Dorsolateral prefrontal cortex (tissue), 120 donors: ENCODE measurements at regions of chr2 and their contacts with region 1.

Region 1: GRCh38 chr2:237966565-237967462 is at the start of gene UBE2F:
- DNase-seq: peak; percentile 93 to 99 (median 96)
- H3K4me3 ChIP-seq: peak within 1 kb of the TSS; percentile 53 to 100 (median 84)
- H3K27ac ChIP-seq: peak within 1 kb of the TSS in 51 of 59 donors; percentile 6 to 88 (median 66)
- H3K27me3 ChIP-seq: no peaks in the 10 kb centered on the region
- CTCF ChIP-seq: peak in 46 of 56 donors; percentile 6 to 67 (median 38)
- total RNA-seq, gene UBE2F: 30.6 to 63.0 (median 47.0) TPM

Region 2: DNA sequence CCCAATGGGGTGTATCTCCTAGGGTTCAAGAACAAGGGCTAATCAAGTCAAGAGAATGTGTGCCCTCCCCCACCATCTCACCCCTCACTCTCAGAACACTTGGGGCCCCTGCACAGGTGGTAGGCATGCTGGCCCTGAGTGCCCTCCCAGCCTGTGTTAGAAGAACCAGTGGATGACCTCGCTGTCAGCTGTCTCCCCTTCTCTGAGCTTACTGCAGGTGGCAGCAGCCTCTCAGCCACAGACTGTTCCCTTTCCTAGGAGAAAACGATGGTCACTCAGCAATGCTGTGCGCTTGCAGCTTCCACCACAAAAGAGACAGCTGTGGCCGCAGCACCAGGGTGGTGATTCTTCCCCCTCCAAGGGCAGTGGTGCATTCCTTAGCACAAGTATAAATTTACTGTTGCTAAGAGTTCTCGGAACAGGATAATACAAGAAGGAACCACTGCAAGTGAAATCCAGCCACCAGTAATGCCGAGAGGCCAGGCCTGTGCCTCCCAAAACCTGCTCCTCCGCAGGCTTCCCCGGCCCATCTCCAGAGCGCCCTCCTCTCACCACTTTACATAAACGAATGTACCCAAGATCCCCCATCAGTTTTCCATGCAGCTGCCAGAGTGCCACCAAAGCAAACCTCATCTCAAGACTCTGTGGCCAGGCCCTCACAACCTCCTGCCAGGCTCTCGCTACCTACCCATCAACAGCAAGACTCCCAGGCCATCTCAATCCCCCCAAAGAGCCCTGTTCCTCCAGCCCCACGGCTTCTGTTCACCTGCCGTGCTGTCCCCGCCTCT is 108.3 kb before region 1 on chr2:
- intact Hi-C with region 1: loop called (anchors 1 to 2 kb)
- DNase-seq: peak; percentile 63 to 88 (median 84)
- H3K4me3 ChIP-seq: peak overlapping the region in 57 of 59 donors; percentile 7 to 83 (median 70)
- H3K27ac ChIP-seq: peak overlapping the region in 57 of 59 donors; percentile 6 to 93 (median 74)
- H3K27me3 ChIP-seq: peaks cover 0 to 2% (median 0%) of the 10 kb centered on the region in 45 donors
- CTCF ChIP-seq: peak; percentile 40 to 95 (median 84)

Region 3: DNA sequence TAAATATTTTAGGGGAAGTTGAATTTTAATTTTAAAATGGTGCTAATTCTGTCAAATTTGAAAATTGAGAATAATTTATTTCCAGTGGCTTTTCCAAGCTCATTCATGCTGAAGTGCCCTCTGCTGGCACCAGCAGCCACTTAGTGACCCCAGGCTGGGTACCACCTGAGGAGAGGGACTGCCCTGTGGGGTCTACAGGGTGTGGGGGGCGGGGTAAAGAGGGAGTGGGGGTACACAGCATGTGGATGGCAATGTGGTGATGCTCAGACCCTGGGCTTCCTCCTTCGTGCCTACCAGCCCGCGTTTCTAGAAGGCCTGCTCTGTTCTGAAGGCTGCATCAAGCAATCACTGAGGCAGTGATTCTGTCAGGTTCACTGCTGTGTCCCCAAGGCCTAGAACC is 48.9 kb after region 1 on chr2:
- intact Hi-C with region 1: loop called (anchors 1 to 5 kb)
- DNase-seq: no peak
- H3K4me3 ChIP-seq: no peak overlapping the region
- H3K27ac ChIP-seq: no peak overlapping the region
- H3K27me3 ChIP-seq: no peaks in the 10 kb centered on the region
- CTCF ChIP-seq: peak in 45 of 56 donors; percentile 12 to 64 (median 34)

Region 4: DNA sequence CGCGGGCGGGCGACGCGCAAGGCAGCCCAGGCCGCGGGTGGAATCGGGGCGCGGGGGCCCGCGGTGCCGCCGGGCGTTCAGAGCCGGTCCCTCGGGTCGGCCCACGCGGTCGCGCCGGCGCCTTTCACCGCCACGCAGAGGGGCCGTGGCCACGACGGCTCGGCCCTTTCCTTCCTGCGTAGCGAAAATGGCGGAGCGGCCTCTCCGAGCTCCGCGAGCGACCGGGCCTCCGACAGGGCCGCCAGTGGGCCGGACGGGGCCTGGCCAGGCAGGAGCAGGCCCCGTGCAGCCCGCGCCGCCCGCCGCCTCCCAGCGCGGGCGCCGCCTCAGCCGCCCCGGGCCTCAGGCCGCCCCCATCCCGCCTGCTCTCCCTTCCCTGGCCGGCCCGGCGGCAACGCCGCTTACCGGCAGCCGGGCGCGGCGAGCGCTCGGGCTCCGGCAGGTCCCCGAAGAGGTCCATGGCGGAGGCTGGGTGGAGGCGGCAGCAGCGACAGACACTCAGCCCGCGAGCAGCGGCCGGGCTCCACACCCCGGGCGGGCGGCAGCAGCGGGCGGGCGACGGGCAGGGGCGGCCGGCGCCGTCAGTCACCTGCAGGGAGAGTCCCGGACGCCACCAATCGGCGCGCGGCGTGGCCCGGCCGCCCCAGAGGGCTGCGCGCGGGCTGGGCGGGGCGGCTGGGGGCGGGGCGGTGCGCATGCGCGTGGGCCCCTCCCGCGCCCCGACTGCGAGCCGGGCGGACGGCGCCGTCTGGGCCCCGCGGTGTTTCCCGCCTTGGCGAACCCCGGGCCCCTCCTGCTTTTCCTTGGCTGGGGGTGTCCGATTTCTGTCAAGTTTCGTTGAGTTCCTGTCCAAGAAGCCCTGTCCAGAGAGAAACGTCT is 236.5 kb after region 1 on chr2 and contains the start of gene ILKAP:
- intact Hi-C with region 1: loop called in 1 of 2 experiments (anchors 5 kb)
- DNase-seq: peak; percentile 70 to 94 (median 85)
- H3K4me3 ChIP-seq: peak within 1 kb of the TSS; percentile 54 to 96 (median 79)
- H3K27ac ChIP-seq: peak within 1 kb of the TSS; percentile 73 to 98 (median 93)
- H3K27me3 ChIP-seq: no peaks in the 10 kb centered on the region
- CTCF ChIP-seq: peak in 9 of 56 donors; percentile 7 to 33 (median 23)
- total RNA-seq, gene ILKAP: 44.0 to 90.8 (median 62.7) TPM

Region 5: DNA sequence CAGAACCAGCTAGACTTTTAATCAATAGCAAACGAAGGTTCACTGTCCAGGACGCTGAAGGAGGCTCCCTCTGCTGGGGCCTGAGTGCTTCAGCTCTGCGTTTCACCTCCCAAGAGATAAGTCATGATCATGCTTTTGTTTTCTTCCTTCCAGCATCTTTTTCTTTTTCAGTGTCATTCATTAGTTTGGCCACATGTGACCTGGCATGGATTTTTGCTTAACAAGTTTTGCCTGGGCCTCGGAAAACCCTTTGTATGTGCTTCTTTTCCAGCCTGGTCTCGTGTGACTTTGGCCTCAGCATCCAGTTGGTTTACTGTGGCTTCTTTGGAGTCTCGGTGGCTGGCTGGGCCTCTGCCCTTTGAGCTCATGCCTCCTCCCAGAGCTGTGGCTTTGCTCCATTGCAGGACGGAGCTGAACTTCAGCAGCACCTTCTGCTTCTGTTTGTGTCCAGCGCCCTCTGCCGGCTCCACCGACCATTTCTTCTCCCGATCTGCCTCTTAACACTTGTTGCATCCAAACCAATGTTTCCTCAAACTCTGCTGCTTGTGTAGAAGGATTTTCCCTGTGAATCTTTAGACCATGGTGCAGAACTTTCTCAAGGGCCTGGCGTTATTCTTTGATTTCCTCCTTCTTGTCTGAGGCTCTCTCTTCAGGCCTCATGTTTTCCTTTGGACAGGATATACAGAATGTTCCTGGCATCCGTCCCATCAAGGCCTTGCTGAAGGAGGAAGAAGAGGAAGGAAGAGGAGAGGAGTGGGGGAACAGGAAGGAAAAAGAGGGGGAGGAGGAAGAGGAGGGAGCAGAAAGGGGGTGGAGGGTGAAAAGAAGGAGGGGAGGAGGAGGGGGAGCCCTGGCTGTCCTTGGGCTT is 296.6 kb after region 1 on chr2:
- intact Hi-C with region 1: loop called (anchors 5 to 10 kb)
- DNase-seq: peak; percentile 85 to 98 (median 94)
- H3K4me3 ChIP-seq: peak overlapping the region in 1 of 59 donors; percentile 7
- H3K27ac ChIP-seq: peak overlapping the region in 42 of 59 donors; percentile 1 to 78 (median 56)
- H3K27me3 ChIP-seq: no peaks in the 10 kb centered on the region
- CTCF ChIP-seq: peak; percentile 50 to 95 (median 88)